ENCODE measurements at regions of chr17 and their contacts with region 1.

Region 1: DNA sequence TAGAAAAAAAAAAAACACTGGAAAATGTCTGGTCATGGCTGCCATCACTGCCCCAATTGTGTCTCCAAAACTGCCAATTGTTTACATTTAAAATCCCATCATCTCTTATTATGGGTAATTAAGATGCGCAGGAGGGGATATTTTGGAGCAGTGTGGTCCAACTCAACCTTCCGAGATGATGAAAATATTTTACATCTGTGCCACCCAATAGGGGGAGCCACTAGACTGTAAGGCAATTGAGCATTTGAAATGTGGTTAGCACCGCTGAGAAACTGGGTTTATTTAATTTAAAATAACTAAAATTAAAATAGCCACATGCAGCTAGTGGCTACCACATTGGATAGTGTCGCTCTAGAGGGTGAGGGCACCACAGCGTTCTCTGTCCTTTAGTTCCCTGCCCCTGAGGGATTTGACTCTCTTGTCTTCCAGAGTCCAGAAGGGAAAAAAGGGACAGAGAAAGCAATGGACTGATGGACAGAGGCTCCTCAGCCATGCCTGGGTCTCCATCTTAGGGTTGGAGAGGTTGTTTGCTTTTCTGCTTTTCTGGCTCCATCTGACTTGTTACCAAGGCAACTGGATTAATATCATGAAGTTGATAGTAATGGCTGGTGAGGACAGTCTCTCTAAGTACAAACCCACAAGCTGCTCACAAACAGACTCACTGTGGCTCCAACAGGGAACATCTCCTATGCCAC is 3.5 kb downstream of the MPO start:
- DNase-seq: no peak
- H3K4me3 ChIP-seq: no peak overlapping the region
- CTCF ChIP-seq: peak; percentile 36

Region 2: GRCh38 chr17:58447039-58447975 is 170.1 kb after region 1 on chr17:
- in situ Hi-C with region 1: loop called (anchors 25 kb)
- DNase-seq: peak; percentile 81
- H3K4me3 ChIP-seq: no peak overlapping the region
- CTCF ChIP-seq: peak; percentile 88